Activated B cell treated with CpG ODN at 0.5 μM for 24 hours (primary cell): ENCODE measurements at regions of chr15 and their contacts with region 1.

Region 1: DNA sequence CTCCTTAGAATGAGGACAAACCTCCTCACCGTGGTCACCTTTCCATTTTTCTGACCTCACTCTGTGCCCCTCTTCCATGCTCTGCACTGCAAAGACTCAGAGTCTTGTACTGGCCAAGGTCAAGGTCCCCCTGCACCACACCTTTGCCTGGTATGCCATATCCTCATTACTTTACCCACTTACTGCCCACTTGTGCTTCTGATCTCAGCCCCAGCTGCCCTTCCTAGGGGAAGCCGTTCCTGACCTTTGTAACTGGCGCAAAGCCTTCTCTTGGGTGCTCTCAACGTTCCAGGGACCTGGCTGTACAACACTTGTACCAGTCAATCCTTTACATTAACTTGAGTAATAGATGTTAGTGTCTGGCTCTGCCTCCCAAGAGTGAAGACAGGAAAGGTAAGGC is 256.0 kb downstream of the SV2B start:
- DNase-seq: no peak
- ATAC-seq: no peak
- H3K4me3 Mint-ChIP-seq: no peak overlapping the region
- H3K27ac Mint-ChIP-seq: no peak overlapping the region
- H3K4me1 Mint-ChIP-seq: no peaks in the 10 kb centered on the region
- H3K27me3 Mint-ChIP-seq: no peaks in the 10 kb centered on the region
- CTCF ChIP-seq: no peak

Region 2: DNA sequence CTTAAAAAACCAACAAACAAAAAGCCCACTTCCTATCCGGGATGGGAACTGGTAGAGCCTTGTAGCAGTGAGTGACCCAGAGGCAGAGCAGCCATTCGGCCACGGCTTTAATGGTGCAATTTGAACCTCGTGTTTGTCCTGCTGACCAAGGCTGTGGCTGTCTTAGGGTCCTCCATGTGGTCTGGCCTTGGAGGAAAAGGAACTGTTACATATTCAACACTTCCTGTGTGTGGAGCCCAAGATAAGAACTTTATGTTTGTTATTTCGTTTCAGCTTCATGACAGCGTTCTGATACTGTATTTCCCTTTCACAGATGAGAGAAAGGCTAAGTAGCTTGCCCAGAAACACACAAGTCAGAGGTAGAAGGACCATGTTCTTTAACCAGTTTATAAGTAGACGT is 13.7 kb after region 1 on chr15:
- CTCF ChIA-PET with region 1: no interaction called
- POLR2A ChIA-PET with region 1: no interaction called
- intact Hi-C with region 1: loop called (anchors 1 kb)
- DNase-seq: no peak
- ATAC-seq: no peak
- H3K4me3 Mint-ChIP-seq: no peak overlapping the region
- H3K27ac Mint-ChIP-seq: no peak overlapping the region
- H3K4me1 Mint-ChIP-seq: no peaks in the 10 kb centered on the region
- H3K27me3 Mint-ChIP-seq: no peaks in the 10 kb centered on the region
- CTCF ChIP-seq: no peak